CD4-positive, alpha-beta memory T cell (primary cell): ENCODE measurements at regions of chr12 and their contacts with region 1.

Region 1: GRCh38 chr12:123905319-123905925 is 67.2 kb downstream of the CCDC92 start:
- DNase-seq: peak; percentile 61 to 73 (median 65)
- H3K4me3 ChIP-seq: no peak overlapping the region
- H3K4me3 Mint-ChIP-seq: no peak overlapping the region
- H3K27ac ChIP-seq: no peak overlapping the region
- H3K27ac Mint-ChIP-seq: peak overlapping the region in 1 of 7 donors; percentile 47
- H3K4me1 ChIP-seq: no peaks in the 10 kb centered on the region
- H3K4me1 Mint-ChIP-seq: peaks cover 8 to 14% (median 10%) of the 10 kb centered on the region in 4 donors
- H3K27me3 ChIP-seq: no peaks in the 10 kb centered on the region
- H3K27me3 Mint-ChIP-seq: peaks cover 8 to 9% of the 10 kb centered on the region in 2 donors

Region 2: DNA sequence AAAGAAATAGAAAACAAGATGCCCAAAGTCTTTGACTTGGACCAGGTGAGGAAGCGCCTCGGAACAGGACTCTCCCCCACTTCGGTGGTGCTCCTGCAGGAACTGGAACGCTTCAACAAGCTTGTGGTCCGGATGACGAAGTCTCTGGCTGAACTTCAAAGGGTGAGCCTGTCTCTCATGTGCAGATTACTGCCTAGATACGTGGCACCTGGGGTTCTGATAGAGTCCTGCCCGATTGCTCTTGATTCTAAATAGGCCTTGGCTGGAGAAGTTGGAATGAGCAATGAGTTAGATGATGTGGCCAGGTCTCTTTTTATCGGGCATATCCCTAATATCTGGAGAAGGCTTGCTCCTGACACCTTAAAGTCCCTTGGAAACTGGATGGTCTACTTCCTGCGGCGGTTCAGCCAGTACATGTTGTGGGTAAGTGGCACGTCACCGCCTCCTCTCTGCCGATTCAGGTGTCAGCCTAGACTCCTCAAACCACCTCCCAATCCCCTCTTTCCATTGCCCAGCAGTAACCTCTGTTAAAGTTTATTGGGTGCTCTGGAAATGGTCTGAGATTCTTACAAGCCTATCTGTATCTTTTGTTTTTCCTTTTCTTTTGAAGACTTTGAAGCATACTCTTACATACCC is 26.4 kb after region 1 on chr12:
- CTCF ChIA-PET with region 1: interaction called, 18 read pairs
- POLR2A ChIA-PET with region 1: no interaction called
- intact Hi-C with region 1: loop called (anchors 1 kb)
- DNase-seq: peak; percentile 60 to 84 (median 71)
- H3K4me3 ChIP-seq: peak overlapping the region in 1 of 2 donors; percentile 3
- H3K4me3 Mint-ChIP-seq: peak overlapping the region; percentile 34 to 80 (median 66)
- H3K27ac ChIP-seq: no peak overlapping the region
- H3K27ac Mint-ChIP-seq: peak overlapping the region; percentile 17 to 87 (median 72)
- H3K4me1 ChIP-seq: peaks cover 19% of the 10 kb centered on the region
- H3K4me1 Mint-ChIP-seq: peaks cover 15 to 29% (median 22%) of the 10 kb centered on the region in 4 donors
- H3K27me3 ChIP-seq: no peaks in the 10 kb centered on the region
- H3K27me3 Mint-ChIP-seq: peaks cover 0 to 1% of the 10 kb centered on the region in 2 donors

Region 3: GRCh38 chr12:123972457-123973401 is 67.3 kb after region 1 on chr12 and contains the starts of genes CCDC92 and ZNF664:
- CTCF ChIA-PET with region 1: interaction called, 10 read pairs
- POLR2A ChIA-PET with region 1: interaction called, 3 read pairs
- intact Hi-C with region 1: no loop called
- DNase-seq: peak; percentile 91 to 96 (median 94)
- H3K4me3 ChIP-seq: peak within 1 kb of the TSS; percentile 2 to 54
- H3K4me3 Mint-ChIP-seq: peak within 1 kb of the TSS; percentile 91 to 98 (median 94)
- H3K27ac ChIP-seq: peak within 1 kb of the TSS; percentile 44
- H3K27ac Mint-ChIP-seq: peak within 1 kb of the TSS; percentile 91 to 99 (median 95)
- H3K4me1 ChIP-seq: peaks cover 21% of the 10 kb centered on the region
- H3K4me1 Mint-ChIP-seq: peaks cover 26 to 48% (median 31%) of the 10 kb centered on the region in 4 donors
- H3K27me3 ChIP-seq: no peaks in the 10 kb centered on the region
- H3K27me3 Mint-ChIP-seq: no peaks in the 10 kb centered on the region
- total RNA-seq, gene CCDC92: 32.1 to 35.6 TPM
- total RNA-seq, gene ZNF664: 54.0 to 57.9 TPM

Region 4: GRCh38 chr12:124036674-124037109 is 131.3 kb after region 1 on chr12:
- CTCF ChIA-PET with region 1: interaction called, 22 read pairs
- POLR2A ChIA-PET with region 1: no interaction called
- intact Hi-C with region 1: loop called (anchors 1 kb)
- DNase-seq: peak in 4 of 5 donors; percentile 35 to 45 (median 42)
- H3K4me3 ChIP-seq: no peak overlapping the region
- H3K4me3 Mint-ChIP-seq: no peak overlapping the region
- H3K27ac ChIP-seq: no peak overlapping the region
- H3K27ac Mint-ChIP-seq: no peak overlapping the region
- H3K4me1 ChIP-seq: no peaks in the 10 kb centered on the region
- H3K4me1 Mint-ChIP-seq: no peaks in the 10 kb centered on the region
- H3K27me3 ChIP-seq: no peaks in the 10 kb centered on the region
- H3K27me3 Mint-ChIP-seq: peaks cover 4% of the 10 kb centered on the region in 2 donors